ENCODE measurements at regions of chr3 and their contacts with region 1.

Region 1: GRCh38 chr3:36919439-36920160 is 25.3 kb downstream of the TRANK1 start:
- DNase-seq: peak; percentile 87
- ATAC-seq: peak; percentile 94
- H3K4me3 ChIP-seq: no peak overlapping the region
- H3K27ac ChIP-seq: peak overlapping the region; percentile 6
- H3K4me1 ChIP-seq: peaks cover 44% of the 10 kb centered on the region
- H3K27me3 ChIP-seq: no peaks in the 10 kb centered on the region; a peak in 1 of 5 replicates
- CTCF ChIP-seq: no peak
- EP300 ChIP-seq: peak in 1 of 2 experiments; percentile 44; a peak in 1 of 4 replicates
- POLR2A ChIP-seq: no peak
- RAD21 ChIP-seq: no peak

Region 2: GRCh38 chr3:36792342-36792741 is 127.3 kb before region 1 on chr3:
- CTCF ChIA-PET with region 1: no interaction called
- POLR2A ChIA-PET with region 1: no interaction called
- in situ Hi-C with region 1: no loop called
- intact Hi-C with region 1: no loop called
- DNase-seq: peak; percentile 30
- ATAC-seq: peak; percentile 94
- H3K4me3 ChIP-seq: no peak overlapping the region
- H3K27ac ChIP-seq: no peak overlapping the region
- H3K4me1 ChIP-seq: no peaks in the 10 kb centered on the region
- H3K27me3 ChIP-seq: no peaks in the 10 kb centered on the region
- CTCF ChIP-seq: peak; percentile 62
- EP300 ChIP-seq: no peak
- POLR2A ChIP-seq: no peak
- RAD21 ChIP-seq: 0 out of 2 replicates have a peak, but pooled peaks have one; percentile 25

Region 3: GRCh38 chr3:36933540-36934296 is 14.1 kb after region 1 on chr3:
- CTCF ChIA-PET with region 1: no interaction called
- POLR2A ChIA-PET with region 1: interaction called, 12 read pairs
- in situ Hi-C with region 1: no loop called
- intact Hi-C with region 1: no loop called
- DNase-seq: no peak
- ATAC-seq: peak; percentile 64
- H3K4me3 ChIP-seq: no peak overlapping the region
- H3K27ac ChIP-seq: no peak overlapping the region
- H3K4me1 ChIP-seq: peaks cover 39% of the 10 kb centered on the region
- H3K27me3 ChIP-seq: no peaks in the 10 kb centered on the region
- CTCF ChIP-seq: no peak
- EP300 ChIP-seq: peak in 1 of 2 experiments; percentile 37; a peak in 1 of 4 replicates
- POLR2A ChIP-seq: no peak
- RAD21 ChIP-seq: no peak

Region 4: DNA sequence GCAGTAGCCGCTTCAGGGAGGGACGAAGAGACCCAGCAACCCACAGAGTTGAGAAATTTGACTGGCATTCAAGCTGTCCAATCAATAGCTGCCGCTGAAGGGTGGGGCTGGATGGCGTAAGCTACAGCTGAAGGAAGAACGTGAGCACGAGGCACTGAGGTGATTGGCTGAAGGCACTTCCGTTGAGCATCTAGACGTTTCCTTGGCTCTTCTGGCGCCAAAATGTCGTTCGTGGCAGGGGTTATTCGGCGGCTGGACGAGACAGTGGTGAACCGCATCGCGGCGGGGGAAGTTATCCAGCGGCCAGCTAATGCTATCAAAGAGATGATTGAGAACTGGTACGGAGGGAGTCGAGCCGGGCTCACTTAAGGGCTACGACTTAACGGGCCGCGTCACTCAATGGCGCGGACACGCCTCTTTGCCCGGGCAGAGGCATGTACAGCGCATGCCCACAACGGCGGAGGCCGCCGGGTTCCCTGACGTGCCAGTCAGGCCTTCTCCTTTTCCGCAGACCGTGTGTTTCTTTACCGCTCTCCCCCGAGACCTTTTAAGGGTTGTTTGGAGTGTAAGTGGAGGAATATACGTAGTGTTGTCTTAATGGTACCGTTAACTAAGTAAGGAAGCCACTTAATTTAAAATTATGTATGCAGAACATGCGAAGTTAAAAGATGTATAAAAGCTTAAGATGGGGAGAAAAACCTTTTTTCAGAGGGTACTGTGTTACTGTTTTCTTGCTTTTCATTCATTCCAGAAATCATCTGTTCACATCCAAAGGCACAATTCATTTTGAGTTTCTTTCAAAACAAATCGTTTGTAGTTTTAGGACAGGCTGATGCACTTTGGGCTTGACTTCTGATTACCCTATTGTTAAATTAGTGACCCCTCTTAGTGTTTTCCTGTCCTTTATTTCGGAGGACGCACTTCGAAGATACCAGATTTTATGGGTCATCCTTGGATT is 74.0 kb after region 1 on chr3 and contains the start of gene MLH1:
- CTCF ChIA-PET with region 1: no interaction called
- POLR2A ChIA-PET with region 1: interaction called, 11 read pairs
- in situ Hi-C with region 1: no loop called
- intact Hi-C with region 1: no loop called
- DNase-seq: peak; percentile 100
- ATAC-seq: peak; percentile 87
- H3K4me3 ChIP-seq: peak within 1 kb of the TSS; percentile 77 to 89 (median 82)
- H3K27ac ChIP-seq: peak within 1 kb of the TSS; percentile 96
- H3K4me1 ChIP-seq: peaks cover 36% of the 10 kb centered on the region
- H3K27me3 ChIP-seq: no peaks in the 10 kb centered on the region; a peak in 1 of 5 replicates
- CTCF ChIP-seq: no peak
- EP300 ChIP-seq: no peak
- POLR2A ChIP-seq: peak; percentile 83 to 87
- RAD21 ChIP-seq: peak; percentile 48; the same call in 1 of the 2 replicates
- total RNA-seq, gene MLH1: 70.8 and 84.7 TPM in 2 replicates

Region 5: DNA sequence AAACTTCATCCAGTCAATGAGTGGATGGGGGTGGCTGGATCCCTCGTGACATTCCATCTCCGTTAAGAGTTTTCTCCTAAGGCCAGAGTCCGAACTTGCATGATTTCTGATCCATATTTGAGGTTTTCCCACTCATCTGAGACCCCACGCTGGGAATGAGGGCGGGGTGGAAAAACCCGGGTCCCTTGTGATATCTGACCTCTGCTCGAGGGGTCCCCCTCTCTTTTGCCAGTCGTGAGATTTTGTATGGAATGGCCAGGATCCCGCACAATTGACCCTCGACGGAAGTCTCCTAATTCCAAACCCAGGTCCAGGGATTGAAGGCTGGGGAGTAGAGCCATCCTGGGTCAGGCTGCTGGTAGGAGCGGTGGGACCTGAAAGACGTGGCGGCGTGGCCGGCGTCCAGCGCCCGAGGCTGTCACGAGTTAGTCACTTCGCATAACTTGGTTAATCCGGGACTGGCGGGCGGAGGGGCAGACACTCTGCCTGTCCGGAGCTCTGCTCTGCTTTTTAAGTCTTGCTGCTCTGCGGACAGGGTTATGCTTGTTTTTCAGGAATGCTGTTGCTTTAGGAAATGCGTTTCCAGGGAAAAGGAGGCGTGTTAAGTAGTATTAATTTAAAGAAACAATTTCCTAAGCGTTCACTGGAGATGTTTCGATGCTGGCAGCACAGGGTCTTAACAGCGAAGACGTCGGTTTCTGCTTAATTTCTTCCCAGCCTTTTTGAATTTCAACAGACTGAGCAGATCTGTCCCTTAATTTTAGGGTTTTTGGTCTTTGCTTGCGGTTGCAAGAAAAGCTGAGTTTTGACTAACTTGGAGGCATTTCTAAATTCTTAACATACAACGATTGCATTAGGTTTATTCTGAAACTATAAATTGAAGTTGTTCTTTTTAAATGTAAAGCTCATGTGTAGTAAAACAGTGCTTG is 324.5 kb after region 1 on chr3:
- CTCF ChIA-PET with region 1: no interaction called
- POLR2A ChIA-PET with region 1: no interaction called
- in situ Hi-C with region 1: no loop called
- intact Hi-C with region 1: no loop called
- DNase-seq: peak; percentile 54
- ATAC-seq: peak; percentile 77
- H3K4me3 ChIP-seq: peak overlapping the region; percentile 79 to 91 (median 89)
- H3K27ac ChIP-seq: peak overlapping the region; percentile 98
- H3K4me1 ChIP-seq: peaks cover 52% of the 10 kb centered on the region
- H3K27me3 ChIP-seq: peaks cover 0 to 3% of the 10 kb centered on the region in 2 experiments; a peak in 1 of 5 replicates
- CTCF ChIP-seq: no peak
- EP300 ChIP-seq: no peak
- POLR2A ChIP-seq: peak; percentile 25 to 49; a peak in 2 of 4 replicates
- RAD21 ChIP-seq: no peak

Measured in HepG2 (cell line).